ENCODE measurements at regions of chr9 and their contacts with region 1.

Region 1: DNA sequence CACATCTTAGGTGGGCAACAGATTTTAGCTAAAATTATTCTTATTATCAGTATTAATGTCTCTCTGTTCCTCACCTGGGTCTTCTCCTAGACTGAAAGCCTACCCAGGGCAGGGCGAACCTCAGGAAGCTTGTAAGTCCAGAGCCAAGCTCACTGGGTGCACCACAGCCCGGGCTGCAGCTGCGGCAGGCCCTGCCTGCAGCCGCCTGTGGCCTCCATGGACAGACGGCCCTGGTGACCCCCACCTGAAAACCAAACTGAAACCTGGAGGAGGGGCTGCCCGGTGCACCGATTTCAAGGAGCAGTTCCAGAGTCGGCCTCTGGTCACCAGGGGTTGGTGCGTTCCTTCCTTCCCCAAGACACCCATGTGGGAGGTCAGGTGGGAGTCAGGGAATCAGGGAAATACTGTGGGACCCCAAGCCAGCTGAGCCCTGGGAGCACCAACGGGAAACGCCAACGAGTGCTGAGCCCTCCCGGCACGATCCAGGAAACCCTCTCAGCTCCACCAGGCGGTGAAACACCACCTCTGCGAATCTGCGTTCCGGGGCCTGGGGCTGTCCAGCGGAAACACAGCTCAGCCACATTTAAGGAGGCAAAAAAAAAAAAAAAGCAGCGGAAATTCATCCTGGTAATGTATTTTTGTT is 68.6 kb upstream of the PPP1R26 start:
- DNase-seq: no peak
- ATAC-seq: no peak
- H3K4me3 ChIP-seq: no peak overlapping the region
- H3K27ac ChIP-seq: no peak overlapping the region
- H3K4me1 ChIP-seq: no peaks in the 10 kb centered on the region
- CTCF ChIP-seq: no peak
- EP300 ChIP-seq: no peak
- POLR2A ChIP-seq: no peak
- RAD21 ChIP-seq: no peak

Region 2: GRCh38 chr9:135006911-135007570 is 403.9 kb before region 1 on chr9:
- CTCF ChIA-PET with region 1: no interaction called
- POLR2A ChIA-PET with region 1: no interaction called
- DNase-seq: no peak
- ATAC-seq: 0 out of 6 replicates have a peak, but pooled peaks of 1 of the 2 experiments have one; percentile 22
- H3K4me3 ChIP-seq: no peak overlapping the region
- H3K27ac ChIP-seq: no peak overlapping the region
- H3K4me1 ChIP-seq: no peaks in the 10 kb centered on the region
- CTCF ChIP-seq: no peak
- EP300 ChIP-seq: no peak
- POLR2A ChIP-seq: no peak
- RAD21 ChIP-seq: no peak

Region 3: GRCh38 chr9:135085830-135086546 is 325.0 kb before region 1 on chr9:
- CTCF ChIA-PET with region 1: interaction called, 414 read pairs
- POLR2A ChIA-PET with region 1: no interaction called
- DNase-seq: peak; percentile 72 to 81
- ATAC-seq: peak; percentile 61 to 85
- H3K4me3 ChIP-seq: peak overlapping the region; percentile 33
- H3K27ac ChIP-seq: peak overlapping the region in 1 of 2 experiments; percentile 49; a peak in 2 of 6 replicates
- H3K4me1 ChIP-seq: peaks cover 5% of the 10 kb centered on the region; the same call in 2 of the 3 replicates
- CTCF ChIP-seq: peak; percentile 90
- EP300 ChIP-seq: no peak
- POLR2A ChIP-seq: no peak
- RAD21 ChIP-seq: peak; percentile 97

Region 4: GRCh38 chr9:135258461-135258860 is 152.5 kb before region 1 on chr9:
- CTCF ChIA-PET with region 1: no interaction called
- POLR2A ChIA-PET with region 1: no interaction called
- DNase-seq: no peak
- ATAC-seq: no peak
- H3K4me3 ChIP-seq: no peak overlapping the region
- H3K27ac ChIP-seq: no peak overlapping the region
- H3K4me1 ChIP-seq: no peaks in the 10 kb centered on the region
- CTCF ChIP-seq: no peak
- EP300 ChIP-seq: no peak
- POLR2A ChIP-seq: no peak
- RAD21 ChIP-seq: no peak

Region 5: DNA sequence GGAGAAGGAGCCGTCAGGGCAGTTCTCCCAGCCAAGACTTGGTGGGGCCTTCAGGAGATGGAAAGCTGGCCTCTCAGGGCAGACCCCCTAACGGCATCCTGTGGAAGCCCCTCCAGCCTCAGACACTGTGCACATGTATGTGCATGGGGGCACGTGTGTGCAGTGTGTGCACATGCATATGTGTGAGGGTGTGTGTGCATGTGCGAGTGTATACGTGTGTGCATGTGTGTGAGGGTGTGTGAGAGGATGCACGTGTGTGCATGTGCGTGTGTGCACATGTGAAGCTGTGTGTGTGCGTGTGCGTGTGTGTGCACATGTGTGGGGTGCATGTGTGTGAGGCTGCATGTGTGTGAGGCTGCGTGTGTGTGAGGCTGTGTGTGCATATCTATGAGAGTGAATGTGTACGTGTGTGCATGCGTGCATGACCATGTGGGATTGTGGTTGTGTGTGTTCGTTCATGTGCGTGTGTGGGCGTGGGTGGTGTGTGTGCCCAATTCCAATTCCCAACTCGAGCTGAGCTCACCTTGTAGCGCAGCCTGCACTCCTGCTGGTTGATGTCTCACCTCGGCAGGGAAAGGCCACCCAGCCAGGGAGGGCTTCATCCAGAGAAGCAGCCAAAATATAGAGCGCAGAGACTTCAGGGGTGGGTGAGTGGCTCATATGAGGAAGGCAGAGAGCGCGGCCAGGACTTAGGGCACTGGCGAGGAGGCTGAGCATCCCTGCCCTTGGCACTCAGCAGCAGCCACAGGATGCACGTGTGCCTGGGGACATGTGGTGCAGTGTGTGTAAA is 74.0 kb before region 1 on chr9:
- CTCF ChIA-PET with region 1: interaction called, 47 read pairs
- POLR2A ChIA-PET with region 1: no interaction called
- DNase-seq: no peak
- ATAC-seq: no peak
- H3K4me3 ChIP-seq: no peak overlapping the region
- H3K27ac ChIP-seq: no peak overlapping the region
- H3K4me1 ChIP-seq: no peaks in the 10 kb centered on the region
- CTCF ChIP-seq: no peak
- EP300 ChIP-seq: no peak
- POLR2A ChIP-seq: no peak
- RAD21 ChIP-seq: no peak

Region 6: DNA sequence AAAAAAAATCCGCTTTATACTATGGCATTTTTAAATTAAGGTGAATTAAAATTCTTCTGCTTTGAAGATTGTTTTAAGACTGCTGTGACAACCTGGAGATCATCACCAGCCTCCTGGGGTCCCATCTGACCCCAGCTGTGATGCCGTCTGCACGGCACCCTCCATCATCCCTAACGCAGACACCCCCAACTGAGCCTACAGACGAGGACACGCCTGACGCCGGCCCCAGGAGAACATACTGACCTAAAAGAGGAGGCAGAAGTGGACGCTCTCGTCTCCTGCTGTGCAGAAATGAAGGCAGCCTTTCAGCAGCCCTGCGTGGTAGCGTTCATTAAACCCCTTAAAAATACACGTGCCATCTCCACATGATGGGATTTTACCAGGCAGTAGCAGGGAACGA is 57.0 kb before region 1 on chr9:
- CTCF ChIA-PET with region 1: interaction called, 24 read pairs
- POLR2A ChIA-PET with region 1: no interaction called
- DNase-seq: no peak
- ATAC-seq: no peak
- H3K4me3 ChIP-seq: no peak overlapping the region
- H3K27ac ChIP-seq: no peak overlapping the region
- H3K4me1 ChIP-seq: no peaks in the 10 kb centered on the region
- CTCF ChIP-seq: no peak
- EP300 ChIP-seq: no peak
- POLR2A ChIP-seq: no peak
- RAD21 ChIP-seq: no peak

Region 7: GRCh38 chr9:135388530-135388929 is 22.4 kb before region 1 on chr9:
- CTCF ChIA-PET with region 1: interaction called, 23 read pairs
- POLR2A ChIA-PET with region 1: no interaction called
- DNase-seq: no peak
- ATAC-seq: peak in 1 of 2 experiments; percentile 26; a peak in 1 of 6 replicates
- H3K4me3 ChIP-seq: no peak overlapping the region
- H3K27ac ChIP-seq: no peak overlapping the region
- H3K4me1 ChIP-seq: no peaks in the 10 kb centered on the region
- CTCF ChIP-seq: no peak
- EP300 ChIP-seq: no peak
- POLR2A ChIP-seq: no peak
- RAD21 ChIP-seq: no peak

Region 8: DNA sequence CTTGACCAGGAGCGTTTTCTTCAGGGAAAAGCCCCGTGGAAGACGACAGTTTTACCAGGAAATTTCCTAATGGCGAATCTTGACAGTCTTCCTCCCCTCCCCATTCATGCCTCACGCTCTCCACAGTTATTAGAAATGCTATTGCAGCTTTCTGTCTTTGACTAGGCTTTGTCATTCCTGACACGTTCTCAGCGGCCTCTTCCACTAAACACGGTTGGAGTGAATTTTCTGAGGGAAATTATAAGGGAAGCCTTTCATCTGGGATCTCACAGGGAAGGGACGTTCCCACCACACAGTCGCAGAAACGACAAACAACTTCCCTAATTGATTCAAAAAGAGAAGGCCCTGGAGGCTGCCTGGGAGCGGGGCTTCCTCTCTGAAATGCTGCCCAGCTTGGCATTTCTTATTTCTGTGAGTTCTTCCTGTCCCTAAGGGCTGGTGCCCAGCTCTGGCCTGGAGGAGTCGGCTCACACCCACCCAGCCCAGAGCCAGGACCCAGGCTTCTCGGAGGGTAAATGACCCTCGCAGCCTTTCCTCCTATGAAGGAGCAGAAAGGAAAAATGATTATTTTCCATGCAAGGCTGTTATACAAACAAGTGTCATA is 11.5 kb after region 1 on chr9:
- CTCF ChIA-PET with region 1: interaction called, 53 read pairs
- POLR2A ChIA-PET with region 1: no interaction called
- DNase-seq: no peak
- ATAC-seq: no peak
- H3K4me3 ChIP-seq: no peak overlapping the region
- H3K27ac ChIP-seq: no peak overlapping the region
- H3K4me1 ChIP-seq: no peaks in the 10 kb centered on the region
- CTCF ChIP-seq: no peak
- EP300 ChIP-seq: no peak
- POLR2A ChIP-seq: no peak
- RAD21 ChIP-seq: no peak

Measured in A549 (cell line).